RWPE1 (cell line): ENCODE measurements at regions of chr10 and their contacts with region 1.

Region 1: GRCh38 chr10:31921031-31921430 is 7.6 kb downstream of the ARHGAP12 start:
- DNase-seq: no peak
- H3K27ac ChIP-seq: no peak overlapping the region
- CTCF ChIP-seq: no peak

Region 2: DNA sequence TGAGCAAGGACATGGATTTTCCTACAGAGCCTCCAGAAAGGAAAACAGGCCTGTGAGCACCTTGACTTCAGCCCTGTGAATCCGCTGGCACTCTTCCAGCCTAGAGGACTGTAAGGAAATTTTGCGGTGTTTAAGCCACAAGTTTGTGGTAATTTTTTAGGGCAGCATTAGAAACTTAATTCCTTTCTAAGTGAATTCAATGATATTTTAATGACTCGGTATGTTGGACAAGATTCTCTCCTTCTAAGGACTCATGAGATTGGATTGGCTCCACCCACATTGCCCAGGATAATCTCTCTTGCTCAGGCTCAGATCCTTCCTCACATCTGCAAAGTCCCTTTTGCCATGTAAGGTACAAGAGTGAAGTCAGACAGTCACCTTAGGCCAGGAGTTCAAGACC is 1296.0 kb before region 1 on chr10:
- CTCF ChIA-PET with region 1: no interaction called
- POLR2A ChIA-PET with region 1: interaction called, 10 read pairs
- DNase-seq: no peak
- H3K27ac ChIP-seq: no peak overlapping the region
- CTCF ChIP-seq: no peak